Heart left ventricle (tissue), 16 donors: ENCODE measurements at regions of chr20 and their contacts with region 1.

Region 1: DNA sequence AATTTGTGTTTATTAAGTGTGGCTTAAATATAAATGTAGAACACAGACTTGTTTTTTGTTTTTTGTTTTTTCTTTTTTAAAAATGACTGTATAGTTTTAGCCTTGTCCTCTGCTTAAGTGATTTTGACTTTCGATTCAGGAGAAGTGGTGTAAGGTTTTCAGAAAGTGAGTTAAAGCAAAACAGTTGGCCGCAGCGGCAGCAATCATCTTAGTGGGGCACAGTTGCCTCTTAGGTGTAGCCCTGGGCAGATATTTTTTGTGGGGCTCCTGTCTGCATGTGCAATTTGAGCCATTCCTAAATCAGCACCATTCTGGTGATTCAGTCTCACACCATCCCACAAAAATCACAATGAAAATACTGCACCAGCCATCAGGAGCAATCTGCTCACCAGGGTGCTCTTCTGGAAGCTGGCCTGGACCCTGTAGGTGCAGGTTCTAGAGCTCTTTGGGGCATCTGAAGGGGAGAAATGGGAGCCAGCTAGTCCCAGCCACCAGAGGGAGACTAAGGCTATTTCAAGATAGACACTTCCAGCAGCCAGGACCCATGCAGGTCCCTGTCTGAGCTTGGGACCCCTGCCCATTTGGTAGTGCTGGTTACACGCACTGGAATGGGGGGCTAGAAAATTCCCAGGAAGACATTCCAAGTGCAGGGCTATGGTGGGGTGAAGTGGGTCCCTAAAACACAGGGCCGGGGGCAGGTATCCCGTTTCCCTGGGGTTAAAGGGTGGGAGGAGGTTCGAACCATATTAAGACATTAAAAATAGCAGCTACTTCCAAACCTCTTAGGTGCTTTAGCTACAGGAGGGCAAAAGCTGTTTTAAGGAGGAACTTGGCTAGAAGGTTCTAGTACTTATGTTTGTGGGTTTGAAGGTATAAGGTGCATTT is 156.6 kb downstream of the NFATC2 start:
- DNase-seq: no peak
- ATAC-seq: peak; percentile 37 to 58 (median 46)
- H3K4me3 ChIP-seq: no peak overlapping the region
- H3K27ac ChIP-seq: no peak overlapping the region
- H3K4me1 ChIP-seq: peaks cover 0 to 49% (median 16%) of the 10 kb centered on the region in 12 donors
- H3K27me3 ChIP-seq: no peaks in the 10 kb centered on the region
- CTCF ChIP-seq: peak; percentile 25 to 68 (median 55)
- POLR2A ChIP-seq: no peak

Region 2: GRCh38 chr20:51492167-51493092 is 106.5 kb after region 1 on chr20:
- intact Hi-C with region 1: loop called in 3 of 10 experiments (anchors 5 to 10 kb)
- DNase-seq: peak; percentile 70 to 85 (median 83)
- ATAC-seq: peak; percentile 75 to 93 (median 92)
- H3K4me3 ChIP-seq: peak overlapping the region in 11 of 12 donors; percentile 11 to 53 (median 40)
- H3K27ac ChIP-seq: peak overlapping the region in 8 of 12 donors; percentile 11 to 62 (median 50)
- H3K4me1 ChIP-seq: peaks cover 0 to 51% (median 24%) of the 10 kb centered on the region in 12 donors
- H3K27me3 ChIP-seq: no peaks in the 10 kb centered on the region
- CTCF ChIP-seq: no peak
- POLR2A ChIP-seq: peak in 1 of 2 donors; percentile 12

Region 3: DNA sequence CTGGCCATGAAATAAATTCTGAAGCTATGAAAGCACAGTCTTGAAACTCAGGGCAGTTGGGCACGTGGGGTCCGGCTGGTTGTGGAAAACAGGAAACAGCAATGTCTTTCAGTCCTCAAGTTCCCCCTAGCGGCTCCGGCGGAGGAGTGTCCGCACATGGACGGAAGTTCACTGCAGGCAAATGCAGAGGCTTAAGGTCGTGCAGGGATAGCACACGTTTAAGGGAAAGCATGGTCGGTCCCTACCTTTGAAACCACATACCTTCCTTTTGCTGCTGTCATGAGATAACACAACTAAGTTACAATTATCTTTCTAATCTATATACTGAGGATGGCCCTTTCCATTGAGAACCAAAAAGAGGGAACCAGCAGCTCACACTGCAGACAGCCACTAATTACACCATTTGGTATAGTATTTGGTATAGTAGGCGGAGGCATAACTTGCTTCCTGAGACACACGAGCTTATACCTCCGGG is 209.2 kb after region 1 on chr20:
- intact Hi-C with region 1: loop called in 7 of 10 experiments (anchors 1 to 5 kb)
- DNase-seq: peak; percentile 86 to 92 (median 89)
- ATAC-seq: peak; percentile 96 to 99 (median 97)
- H3K4me3 ChIP-seq: peak overlapping the region in 1 of 12 donors; percentile 17
- H3K27ac ChIP-seq: peak overlapping the region in 2 of 12 donors; percentile 1 to 7
- H3K4me1 ChIP-seq: peaks cover 0 to 14% (median 4%) of the 10 kb centered on the region in 12 donors
- H3K27me3 ChIP-seq: no peaks in the 10 kb centered on the region
- CTCF ChIP-seq: peak; percentile 81 to 92 (median 87)
- POLR2A ChIP-seq: no peak

Region 4: DNA sequence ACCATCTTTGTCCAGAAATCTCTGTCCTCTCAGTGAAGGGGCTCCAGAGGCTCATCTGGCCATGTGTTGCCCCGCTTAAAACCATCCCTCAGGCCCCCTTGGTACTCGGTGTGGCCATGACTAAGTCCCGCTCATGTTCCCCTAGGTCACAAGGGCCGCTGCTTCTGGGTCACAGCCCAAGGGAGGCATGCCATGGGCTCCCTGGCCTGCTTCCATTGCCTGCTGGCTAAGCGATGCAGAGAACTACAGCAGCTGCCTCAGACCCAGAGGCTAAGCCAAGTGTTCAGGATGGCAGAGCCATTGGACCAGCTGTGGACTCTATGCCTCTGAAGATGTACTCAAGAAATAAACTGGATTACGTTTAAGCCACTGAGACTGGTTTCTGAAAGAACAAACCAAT is 710.2 kb after region 1 on chr20:
- intact Hi-C with region 1: loop called in 1 of 10 experiments (anchors 10 kb)
- DNase-seq: no peak
- ATAC-seq: peak in 2 of 4 donors; percentile 22 to 33
- H3K4me3 ChIP-seq: no peak overlapping the region
- H3K27ac ChIP-seq: no peak overlapping the region
- H3K4me1 ChIP-seq: no peaks in the 10 kb centered on the region
- H3K27me3 ChIP-seq: no peaks in the 10 kb centered on the region
- CTCF ChIP-seq: no peak
- POLR2A ChIP-seq: no peak